PC-3 (cell line): ENCODE measurements at regions of chr1 and their contacts with region 1.

Region 1: GRCh38 chr1:19715334-19716203 is 50.9 kb downstream of the HTR6 start:
- DNase-seq: peak; percentile 97
- ATAC-seq: peak; percentile 99
- H3K4me3 ChIP-seq: no peak overlapping the region
- H3K27ac ChIP-seq: no peak overlapping the region
- H3K4me1 ChIP-seq: no peaks in the 10 kb centered on the region
- H3K27me3 ChIP-seq: no peaks in the 10 kb centered on the region
- CTCF ChIP-seq: peak; percentile 90

Region 2: GRCh38 chr1:19762175-19762779 is 46.7 kb after region 1 on chr1:
- CTCF ChIA-PET with region 1: no interaction called
- POLR2A ChIA-PET with region 1: no interaction called
- intact Hi-C with region 1: loop called (anchors 2 kb)
- DNase-seq: peak; percentile 57
- ATAC-seq: peak; percentile 19
- H3K4me3 ChIP-seq: no peak overlapping the region
- H3K27ac ChIP-seq: no peak overlapping the region
- H3K4me1 ChIP-seq: peaks cover 32% of the 10 kb centered on the region
- H3K27me3 ChIP-seq: no peaks in the 10 kb centered on the region
- CTCF ChIP-seq: peak; percentile 93